ENCODE measurements at regions of chr19 and their contacts with region 1.

Region 1: GRCh38 chr19:11964858-11965645 is at the start of gene ZNF763:
- DNase-seq: peak; percentile 83 to 97
- H3K4me3 ChIP-seq: peak within 1 kb of the TSS; percentile 72 to 87
- H3K27ac ChIP-seq: peak within 1 kb of the TSS; percentile 94
- H3K4me1 ChIP-seq: peaks cover 9 to 17% of the 10 kb centered on the region in 2 donors
- H3K27me3 ChIP-seq: no peaks in the 10 kb centered on the region
- CTCF ChIP-seq: no peak
- total RNA-seq, gene ZNF763: 2.8 TPM

Region 2: GRCh38 chr19:11535792-11536595 is 429.1 kb before region 1 on chr19:
- intact Hi-C with region 1: no loop called
- DNase-seq: peak; percentile 78 to 96
- H3K4me3 ChIP-seq: peak overlapping the region; percentile 37 to 55
- H3K27ac ChIP-seq: peak overlapping the region; percentile 95 to 97
- H3K4me1 ChIP-seq: peaks cover 7 to 20% of the 10 kb centered on the region in 2 donors
- H3K27me3 ChIP-seq: no peaks in the 10 kb centered on the region
- CTCF ChIP-seq: peak; percentile 91 to 98 (median 93)

Region 3: DNA sequence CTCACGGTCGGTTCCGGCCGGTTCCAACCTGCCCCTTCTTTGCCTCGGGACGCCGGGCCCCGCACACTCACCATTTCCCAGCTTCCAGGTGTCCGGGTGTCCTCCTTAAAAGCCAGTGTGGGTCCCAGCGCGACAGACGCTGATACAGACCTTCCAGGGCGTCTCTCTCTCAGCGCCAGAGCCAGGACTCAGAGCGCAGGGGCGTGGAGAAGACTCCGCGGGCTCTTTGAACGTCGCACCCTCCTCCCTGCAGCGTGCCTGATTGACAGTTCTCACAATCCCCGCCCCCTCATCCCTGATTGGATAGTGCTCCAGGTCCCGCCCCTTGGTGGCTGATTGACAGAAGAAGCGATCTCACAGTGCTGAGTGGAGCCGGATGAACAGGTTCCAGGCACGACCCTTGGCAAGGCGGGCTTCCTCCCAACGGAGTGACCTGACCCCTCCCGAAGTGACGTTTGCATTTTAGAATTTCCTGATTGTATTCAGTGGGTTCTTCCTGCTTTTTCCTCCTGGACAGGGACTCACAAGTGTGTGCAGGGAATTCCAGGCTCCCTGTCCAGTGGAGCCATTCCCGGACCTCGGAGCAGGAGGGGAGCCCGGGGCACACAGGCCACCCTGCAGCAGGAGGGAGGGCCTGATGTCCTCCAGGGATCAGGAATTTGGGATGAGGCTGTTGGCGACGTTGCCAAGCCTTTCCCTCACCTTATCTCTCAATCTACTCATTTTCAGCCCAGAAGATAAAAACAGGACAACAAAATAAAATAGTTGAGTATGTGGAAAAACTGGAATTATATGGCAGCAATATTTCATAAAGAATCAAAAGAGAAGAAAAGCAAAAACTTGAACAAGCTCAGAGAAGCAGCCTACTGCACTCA is 226.1 kb before region 1 on chr19 and contains the start of gene ZNF823:
- intact Hi-C with region 1: no loop called
- DNase-seq: peak; percentile 96 to 100
- H3K4me3 ChIP-seq: peak within 1 kb of the TSS; percentile 63 to 98
- H3K27ac ChIP-seq: peak within 1 kb of the TSS; percentile 85 to 88
- H3K4me1 ChIP-seq: peaks cover 0 to 7% of the 10 kb centered on the region in 2 donors
- H3K27me3 ChIP-seq: no peaks in the 10 kb centered on the region
- CTCF ChIP-seq: no peak
- total RNA-seq, gene ZNF823: 5.2 TPM

Region 4: GRCh38 chr19:11798391-11799330 is 166.4 kb before region 1 on chr19 and contains the start of gene ZNF491:
- intact Hi-C with region 1: loop called (anchors 2 kb)
- DNase-seq: peak; percentile 73 to 95
- H3K4me3 ChIP-seq: peak within 1 kb of the TSS; percentile 71 to 72
- H3K27ac ChIP-seq: peak within 1 kb of the TSS; percentile 60 to 80
- H3K4me1 ChIP-seq: peaks cover 6 to 8% of the 10 kb centered on the region in 2 donors
- H3K27me3 ChIP-seq: no peaks in the 10 kb centered on the region
- CTCF ChIP-seq: peak in 2 of 3 experiments; percentile 11 to 27
- total RNA-seq, gene ZNF491: not detected

Region 5: GRCh38 chr19:11924886-11925650 is 40.0 kb before region 1 on chr19 and contains the start of gene ZNF700:
- intact Hi-C with region 1: loop called (anchors 1 kb)
- DNase-seq: peak; percentile 77 to 97
- H3K4me3 ChIP-seq: peak within 1 kb of the TSS; percentile 84 to 88
- H3K27ac ChIP-seq: peak within 1 kb of the TSS; percentile 92 to 93
- H3K4me1 ChIP-seq: peaks cover 3 to 10% of the 10 kb centered on the region in 2 donors
- H3K27me3 ChIP-seq: no peaks in the 10 kb centered on the region
- CTCF ChIP-seq: no peak
- total RNA-seq, gene ZNF700: 4.4 TPM

Region 6: DNA sequence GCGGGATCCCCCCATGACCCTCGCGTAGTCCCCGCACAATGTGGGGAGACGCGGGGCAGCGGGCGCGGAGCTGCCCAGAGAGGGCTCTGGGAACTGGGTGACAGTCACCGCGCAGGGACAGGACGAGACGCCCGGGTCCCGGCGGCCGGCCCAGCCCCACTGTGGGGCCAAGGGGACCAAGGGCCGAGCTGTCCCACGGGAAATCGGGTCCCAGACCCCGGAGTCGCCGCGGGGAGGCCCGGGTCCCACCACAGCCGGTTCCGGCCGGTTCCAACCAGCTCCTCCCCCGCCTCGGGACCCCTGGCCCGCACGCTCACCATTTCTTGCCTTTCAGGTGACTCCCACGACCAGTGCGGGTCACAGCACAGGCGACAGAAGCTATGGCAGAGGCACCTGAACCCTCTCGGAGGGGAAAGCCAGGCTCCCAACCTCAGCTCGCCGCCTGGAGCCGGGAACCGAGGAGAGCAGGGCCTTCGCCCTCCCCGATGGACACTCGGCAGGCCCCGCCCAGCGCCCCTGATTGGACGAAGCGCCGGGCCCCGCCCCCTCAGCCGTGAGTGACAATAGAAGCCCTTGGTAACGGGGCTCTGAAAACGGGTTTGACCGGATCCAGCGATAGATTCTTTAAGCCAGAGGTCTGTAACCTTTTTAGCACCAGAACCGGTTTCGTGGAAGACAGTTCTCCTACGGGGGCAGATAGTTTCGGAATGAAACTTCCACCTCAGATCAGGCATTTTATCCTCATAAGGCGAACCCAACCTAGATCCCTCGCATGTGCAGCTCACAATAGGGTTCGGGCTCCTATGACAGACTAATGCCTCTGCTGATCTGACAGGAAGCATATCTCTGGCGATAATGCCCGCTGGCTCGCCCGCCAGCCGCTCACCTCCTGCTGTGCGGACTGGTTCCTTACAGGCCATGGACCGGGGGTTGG is 70.4 kb after region 1 on chr19 and contains the start of gene ZNF433:
- intact Hi-C with region 1: loop called (anchors 5 kb)
- DNase-seq: peak; percentile 75 to 97
- H3K4me3 ChIP-seq: peak within 1 kb of the TSS; percentile 68 to 74
- H3K27ac ChIP-seq: peak within 1 kb of the TSS; percentile 74 to 84
- H3K4me1 ChIP-seq: peaks cover 0 to 5% of the 10 kb centered on the region in 2 donors
- H3K27me3 ChIP-seq: no peaks in the 10 kb centered on the region
- CTCF ChIP-seq: no peak
- total RNA-seq, gene ZNF433: not detected

Region 7: DNA sequence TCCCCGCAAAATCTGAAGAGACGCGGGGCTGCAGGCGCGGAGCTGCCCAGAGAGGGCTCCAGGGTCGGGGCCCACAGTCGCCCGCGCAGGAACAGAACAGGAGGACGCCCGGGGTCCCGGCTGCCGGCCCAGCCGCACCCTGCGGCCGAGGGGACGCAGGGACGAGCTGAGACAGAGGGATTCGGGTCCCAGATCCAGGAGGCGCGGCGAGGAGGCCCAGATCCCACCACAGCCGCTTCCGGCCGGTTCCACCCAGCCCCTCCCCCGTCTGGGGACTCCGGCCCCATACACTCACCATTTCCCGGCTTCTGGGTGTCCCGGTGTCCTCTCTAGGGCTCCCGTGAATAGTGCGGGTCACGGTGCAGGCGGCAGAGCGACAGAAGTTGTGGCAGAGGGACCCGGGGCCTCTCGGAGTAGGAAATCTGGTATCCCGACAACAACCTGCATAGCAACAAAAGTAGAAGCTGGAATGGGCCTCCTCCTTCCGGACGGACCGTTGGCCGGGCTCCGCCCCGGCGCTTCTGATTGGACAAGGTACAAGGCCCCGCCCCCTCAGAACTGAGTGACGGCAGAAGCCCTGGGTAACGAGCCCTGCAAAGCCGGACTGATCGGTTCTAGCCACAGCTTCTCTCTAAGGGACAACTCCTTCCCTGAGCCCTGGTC is 175.0 kb after region 1 on chr19 and contains the start of gene ZNF20:
- intact Hi-C with region 1: loop called (anchors 1 kb)
- DNase-seq: peak; percentile 87 to 98
- H3K4me3 ChIP-seq: peak within 1 kb of the TSS; percentile 76 to 83
- H3K27ac ChIP-seq: peak within 1 kb of the TSS; percentile 78 to 82
- H3K4me1 ChIP-seq: peaks cover 0 to 17% of the 10 kb centered on the region in 2 donors
- H3K27me3 ChIP-seq: no peaks in the 10 kb centered on the region
- CTCF ChIP-seq: peak in 1 of 3 experiments; percentile 2
- total RNA-seq, gene ZNF20: 0.96 TPM

Region 8: DNA sequence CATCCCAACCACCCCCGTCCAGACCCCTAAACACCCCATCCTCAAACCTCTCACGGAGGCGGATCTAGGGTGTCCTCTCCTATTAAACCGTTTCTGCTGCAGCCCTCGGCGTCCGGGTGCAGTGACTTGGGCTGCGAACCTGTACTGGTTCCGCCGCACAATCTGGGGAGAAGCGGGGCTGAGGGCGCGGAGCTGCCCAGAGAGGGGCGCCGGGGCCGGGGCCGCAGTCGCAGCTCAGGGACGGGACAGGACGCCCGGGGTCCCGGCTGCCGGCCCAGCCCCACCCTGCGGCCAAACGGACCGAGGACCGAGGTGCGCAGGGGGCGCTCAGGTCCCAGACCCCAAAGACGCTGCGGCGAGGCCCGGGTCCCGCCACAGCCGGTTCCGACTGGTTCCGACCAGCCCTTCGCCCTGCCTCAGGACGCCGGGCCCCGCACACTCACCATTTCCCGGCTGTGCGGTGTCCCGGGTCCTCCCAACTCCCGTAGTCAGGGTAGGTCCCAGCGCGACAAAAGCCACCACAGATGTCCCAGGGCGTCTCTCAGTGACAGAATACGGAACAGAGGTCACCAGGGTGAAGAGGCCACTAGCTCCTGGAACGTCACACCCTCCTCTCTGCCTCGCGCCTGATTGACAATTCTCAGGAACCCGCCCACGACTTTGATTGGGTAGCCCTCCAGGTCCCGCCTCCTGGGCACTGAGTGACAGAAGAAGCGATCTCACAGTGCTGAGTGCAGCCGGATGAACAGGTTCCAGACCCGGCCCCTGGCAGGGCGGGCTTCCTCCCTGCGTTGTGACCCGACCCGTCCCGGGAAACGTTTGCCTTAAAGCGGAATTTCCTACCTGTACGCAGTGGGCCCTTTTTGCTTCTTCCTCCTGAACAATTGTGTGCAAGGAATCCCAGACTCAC is 329.5 kb after region 1 on chr19 and contains the start of gene ZNF44:
- intact Hi-C with region 1: loop called (anchors 1 kb)
- DNase-seq: peak; percentile 97 to 99
- H3K4me3 ChIP-seq: peak within 1 kb of the TSS; percentile 76 to 80
- H3K27ac ChIP-seq: peak within 1 kb of the TSS; percentile 84
- H3K4me1 ChIP-seq: peaks cover 8 to 15% of the 10 kb centered on the region in 2 donors
- H3K27me3 ChIP-seq: no peaks in the 10 kb centered on the region
- CTCF ChIP-seq: no peak
- total RNA-seq, gene ZNF44: 10.4 TPM

Measured in ascending aorta (tissue), 2 donors.